K562 (cell line): ENCODE measurements at regions of chr4 and their contacts with region 1.

Region 1: GRCh38 chr4:140252742-140253555 is 99.0 kb upstream of the MAML3 start:
- DNase-seq: peak; percentile 50 to 82 (median 77)
- ATAC-seq: peak; percentile 90
- H3K4me3 ChIP-seq: peak overlapping the region; percentile 34
- H3K27ac ChIP-seq: no peak overlapping the region
- H3K4me1 ChIP-seq: peaks cover 0 to 9% of the 10 kb centered on the region in 2 experiments; a peak in 2 of 5 replicates
- H3K27me3 ChIP-seq: peaks cover 0 to 20% of the 10 kb centered on the region in 2 experiments; a peak in 2 of 5 replicates
- CTCF ChIP-seq: peak; percentile 60 to 84 (median 66)
- EP300 ChIP-seq: no peak
- POLR2A ChIP-seq: no peak
- RAD21 ChIP-seq: peak; percentile 46 to 52; a peak in 3 of 4 replicates

Region 2: DNA sequence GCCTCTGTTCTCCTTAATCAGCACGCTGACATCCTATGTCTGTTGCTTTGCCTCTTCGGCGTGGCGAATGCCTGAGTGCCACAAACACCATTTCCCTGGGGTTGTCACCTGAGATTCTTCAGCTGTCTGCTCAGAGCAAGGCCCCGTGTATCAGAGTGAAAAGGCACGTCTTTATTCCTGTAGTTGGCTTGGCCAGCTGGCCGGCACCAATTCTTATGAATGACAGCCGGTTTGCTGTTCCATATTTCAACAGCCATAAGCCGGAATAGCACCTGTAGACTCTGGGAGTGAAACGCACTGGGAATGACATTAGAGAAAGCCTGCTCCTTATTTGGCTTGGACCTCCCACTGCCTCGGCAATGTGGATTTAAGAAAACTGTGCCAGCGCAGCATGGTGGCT is 498.0 kb before region 1 on chr4:
- CTCF ChIA-PET with region 1: no interaction called
- POLR2A ChIA-PET with region 1: no interaction called
- in situ Hi-C with region 1: no loop called
- intact Hi-C with region 1: loop called (anchors 10 kb)
- DNase-seq: no peak
- ATAC-seq: no peak
- H3K4me3 ChIP-seq: no peak overlapping the region
- H3K27ac ChIP-seq: no peak overlapping the region
- H3K4me1 ChIP-seq: no peaks in the 10 kb centered on the region
- H3K27me3 ChIP-seq: peaks cover 20 to 22% of the 10 kb centered on the region in 2 experiments
- CTCF ChIP-seq: no peak
- EP300 ChIP-seq: no peak
- POLR2A ChIP-seq: no peak
- RAD21 ChIP-seq: no peak

Region 3: DNA sequence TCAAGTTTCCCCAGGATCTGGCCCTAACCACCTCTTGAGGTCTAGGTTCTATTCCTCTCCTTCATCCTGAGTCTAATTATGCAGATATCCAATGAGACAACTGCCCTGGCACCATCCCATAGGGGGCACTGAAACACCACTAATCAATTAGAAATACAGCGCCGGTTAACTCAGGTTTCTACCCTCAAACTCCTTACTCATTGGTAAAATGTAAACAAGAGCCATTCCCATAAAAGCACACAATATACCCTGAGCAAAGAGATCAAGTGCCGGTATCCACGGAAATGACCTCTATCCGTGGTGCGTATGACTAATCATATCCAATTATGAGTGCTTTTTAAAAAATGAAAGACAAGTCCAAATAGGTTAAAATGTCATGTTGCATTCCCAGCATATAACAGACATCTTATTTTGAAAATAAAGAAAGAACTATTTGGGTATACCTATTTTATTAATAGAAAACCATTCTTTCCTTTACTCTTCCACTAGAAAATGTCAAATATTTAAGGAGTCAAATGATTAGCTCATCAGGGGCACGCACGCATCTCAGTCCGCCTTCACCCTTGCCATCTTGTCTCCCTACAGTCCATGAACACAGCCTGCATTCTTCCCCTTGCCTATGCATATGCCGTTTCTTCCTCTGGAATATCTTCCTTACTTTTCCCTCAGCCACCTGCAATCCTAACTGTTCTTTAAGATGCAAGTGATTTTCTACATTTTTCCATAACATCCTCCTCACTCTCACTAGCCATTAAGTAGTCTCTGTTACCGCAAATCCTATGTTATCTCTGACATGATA is 240.1 kb before region 1 on chr4:
- CTCF ChIA-PET with region 1: no interaction called
- POLR2A ChIA-PET with region 1: no interaction called
- in situ Hi-C with region 1: no loop called
- intact Hi-C with region 1: loop called (anchors 1 kb)
- DNase-seq: peak; percentile 12 to 26 (median 20)
- ATAC-seq: peak; percentile 79
- H3K4me3 ChIP-seq: no peak overlapping the region
- H3K27ac ChIP-seq: no peak overlapping the region
- H3K4me1 ChIP-seq: no peaks in the 10 kb centered on the region
- H3K27me3 ChIP-seq: peaks cover 3% of the 10 kb centered on the region in 2 experiments; a peak in 2 of 5 replicates
- CTCF ChIP-seq: peak; percentile 44 to 62 (median 46); a peak in 4 of 6 replicates
- EP300 ChIP-seq: no peak
- POLR2A ChIP-seq: no peak
- RAD21 ChIP-seq: peak; percentile 42 to 48

Region 4: GRCh38 chr4:140037357-140038030 is 215.5 kb before region 1 on chr4:
- CTCF ChIA-PET with region 1: no interaction called
- POLR2A ChIA-PET with region 1: no interaction called
- in situ Hi-C with region 1: loop called (anchors 10 kb)
- intact Hi-C with region 1: no loop called
- DNase-seq: no peak
- ATAC-seq: no peak
- H3K4me3 ChIP-seq: no peak overlapping the region
- H3K27ac ChIP-seq: no peak overlapping the region
- H3K4me1 ChIP-seq: no peaks in the 10 kb centered on the region
- H3K27me3 ChIP-seq: peaks cover 0 to 20% of the 10 kb centered on the region in 2 experiments; a peak in 3 of 5 replicates
- CTCF ChIP-seq: no peak
- EP300 ChIP-seq: no peak
- POLR2A ChIP-seq: no peak
- RAD21 ChIP-seq: no peak

Region 5: DNA sequence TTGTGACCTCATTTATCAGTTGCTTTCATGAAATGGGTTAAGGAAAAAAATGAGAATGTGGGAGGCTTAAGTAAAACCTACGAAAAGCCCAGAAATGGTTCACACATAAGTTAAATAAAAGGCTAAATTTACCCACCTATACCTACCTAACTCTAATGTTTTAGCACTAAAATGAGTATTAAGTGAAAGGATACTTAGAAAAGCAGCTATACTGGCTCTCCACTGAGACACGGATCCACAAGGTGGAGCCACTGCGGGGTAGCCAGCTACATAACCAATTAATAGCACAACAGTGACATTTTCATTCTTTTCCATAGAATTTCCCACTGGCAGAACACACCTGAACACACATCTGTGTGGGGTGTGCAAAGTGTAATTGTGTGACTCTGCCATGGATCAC is 200.9 kb before region 1 on chr4:
- CTCF ChIA-PET with region 1: interaction called, 7 read pairs
- POLR2A ChIA-PET with region 1: no interaction called
- in situ Hi-C with region 1: no loop called
- intact Hi-C with region 1: loop called (anchors 2 kb)
- DNase-seq: peak in 2 of 4 experiments; percentile 24 to 30
- ATAC-seq: peak; percentile 78
- H3K4me3 ChIP-seq: no peak overlapping the region
- H3K27ac ChIP-seq: no peak overlapping the region
- H3K4me1 ChIP-seq: no peaks in the 10 kb centered on the region; a peak in 1 of 5 replicates
- H3K27me3 ChIP-seq: peaks cover 6 to 19% of the 10 kb centered on the region in 2 experiments; a peak in 4 of 5 replicates
- CTCF ChIP-seq: peak in 2 of 3 experiments; percentile 45 to 49; a peak in 4 of 6 replicates
- EP300 ChIP-seq: no peak
- POLR2A ChIP-seq: no peak
- RAD21 ChIP-seq: peak; percentile 17 to 44; a peak in 3 of 4 replicates

Region 6: GRCh38 chr4:140153718-140154571 is 99.0 kb before region 1 on chr4 and contains the start of gene MAML3:
- CTCF ChIA-PET with region 1: no interaction called
- POLR2A ChIA-PET with region 1: interaction called, 3 read pairs
- in situ Hi-C with region 1: no loop called
- intact Hi-C with region 1: loop called (anchors 1 kb)
- DNase-seq: peak; percentile 77 to 90 (median 80)
- ATAC-seq: peak; percentile 73
- H3K4me3 ChIP-seq: peak within 1 kb of the TSS; percentile 61
- H3K27ac ChIP-seq: peak within 1 kb of the TSS; percentile 41
- H3K4me1 ChIP-seq: peaks cover 0 to 33% of the 10 kb centered on the region in 2 experiments; a peak in 3 of 5 replicates
- H3K27me3 ChIP-seq: peaks cover 7 to 22% of the 10 kb centered on the region in 2 experiments; a peak in 3 of 5 replicates
- CTCF ChIP-seq: no peak
- EP300 ChIP-seq: no peak
- POLR2A ChIP-seq: peak; percentile 36; the same call in 1 of the 2 replicates
- RAD21 ChIP-seq: no peak
- polyA plus RNA-seq, gene MAML3: 0.01 to 0.06 TPM

Region 7: GRCh38 chr4:140268186-140268841 is 15.4 kb after region 1 on chr4:
- CTCF ChIA-PET with region 1: no interaction called
- POLR2A ChIA-PET with region 1: no interaction called
- in situ Hi-C with region 1: no loop called
- intact Hi-C with region 1: no loop called
- DNase-seq: no peak
- ATAC-seq: no peak
- H3K4me3 ChIP-seq: no peak overlapping the region
- H3K27ac ChIP-seq: no peak overlapping the region
- H3K4me1 ChIP-seq: no peaks in the 10 kb centered on the region
- H3K27me3 ChIP-seq: peaks cover 9 to 26% of the 10 kb centered on the region in 2 experiments
- CTCF ChIP-seq: no peak
- EP300 ChIP-seq: no peak
- POLR2A ChIP-seq: no peak
- RAD21 ChIP-seq: no peak